ENCODE measurements at regions of chr10 and their contacts with region 1.

Region 1: GRCh38 chr10:119416855-119417254 is 125.7 kb downstream of the RGS10 start:
- DNase-seq: peak; percentile 45 to 83 (median 73)
- ATAC-seq: peak; percentile 86
- H3K4me3 ChIP-seq: no peak overlapping the region
- H3K4me3 Mint-ChIP-seq: no peak overlapping the region
- H3K27ac ChIP-seq: no peak overlapping the region
- H3K27ac Mint-ChIP-seq: no peak overlapping the region
- H3K4me1 ChIP-seq: no peaks in the 10 kb centered on the region
- H3K4me1 Mint-ChIP-seq: peaks cover 2% of the 10 kb centered on the region
- H3K27me3 ChIP-seq: no peaks in the 10 kb centered on the region
- H3K27me3 Mint-ChIP-seq: no peaks in the 10 kb centered on the region
- CTCF ChIP-seq: peak; percentile 60

Region 2: DNA sequence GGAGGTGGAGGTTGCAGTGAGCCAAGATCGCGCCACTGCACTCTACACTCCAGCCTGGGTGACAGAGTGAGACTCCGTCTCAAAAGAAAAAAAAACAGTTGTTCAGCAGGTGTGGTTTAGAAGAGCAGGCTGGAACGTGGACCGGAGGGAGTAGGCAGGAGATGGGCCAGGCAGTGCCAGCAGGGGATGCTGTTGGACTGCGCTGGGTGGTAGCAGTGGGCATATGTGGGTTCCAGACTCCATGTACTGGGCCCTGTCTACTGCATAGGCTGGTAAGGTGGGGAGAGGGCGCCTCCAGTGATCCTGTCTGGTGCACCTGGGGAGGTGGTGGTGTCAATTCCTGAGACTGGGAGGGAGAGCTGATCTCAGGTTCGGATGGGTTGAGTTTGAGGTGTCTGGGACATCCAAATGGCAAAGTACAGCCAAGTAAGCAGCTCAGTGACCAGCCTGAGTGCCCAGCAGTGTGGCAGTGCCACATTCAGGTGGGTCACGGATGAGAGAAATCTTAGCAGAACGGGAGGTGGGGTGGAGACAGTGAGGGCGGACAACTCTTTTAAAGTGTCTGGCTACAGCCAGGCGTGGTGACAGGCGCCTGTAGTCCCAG is 277.3 kb before region 1 on chr10:
- CTCF ChIA-PET with region 1: interaction called, 6 read pairs
- POLR2A ChIA-PET with region 1: no interaction called
- intact Hi-C with region 1: loop called (anchors 1 to 2 kb)
- DNase-seq: peak; percentile 14 to 71 (median 53)
- ATAC-seq: peak; percentile 88
- H3K4me3 ChIP-seq: no peak overlapping the region
- H3K4me3 Mint-ChIP-seq: no peak overlapping the region
- H3K27ac ChIP-seq: no peak overlapping the region
- H3K27ac Mint-ChIP-seq: peak overlapping the region; percentile 34
- H3K4me1 ChIP-seq: no peaks in the 10 kb centered on the region
- H3K4me1 Mint-ChIP-seq: peaks cover 6% of the 10 kb centered on the region
- H3K27me3 ChIP-seq: no peaks in the 10 kb centered on the region
- H3K27me3 Mint-ChIP-seq: no peaks in the 10 kb centered on the region
- CTCF ChIP-seq: peak; percentile 38

Region 3: GRCh38 chr10:119199231-119199992 is 217.4 kb before region 1 on chr10:
- CTCF ChIA-PET with region 1: interaction called, 33 read pairs
- POLR2A ChIA-PET with region 1: no interaction called
- intact Hi-C with region 1: loop called (anchors 1 kb)
- DNase-seq: peak in 8 of 9 experiments; percentile 15 to 72 (median 46)
- ATAC-seq: peak; percentile 82
- H3K4me3 ChIP-seq: no peak overlapping the region
- H3K4me3 Mint-ChIP-seq: no peak overlapping the region
- H3K27ac ChIP-seq: no peak overlapping the region
- H3K27ac Mint-ChIP-seq: no peak overlapping the region
- H3K4me1 ChIP-seq: no peaks in the 10 kb centered on the region
- H3K4me1 Mint-ChIP-seq: peaks cover 7% of the 10 kb centered on the region
- H3K27me3 ChIP-seq: no peaks in the 10 kb centered on the region
- H3K27me3 Mint-ChIP-seq: no peaks in the 10 kb centered on the region
- CTCF ChIP-seq: peak; percentile 44

Region 4: DNA sequence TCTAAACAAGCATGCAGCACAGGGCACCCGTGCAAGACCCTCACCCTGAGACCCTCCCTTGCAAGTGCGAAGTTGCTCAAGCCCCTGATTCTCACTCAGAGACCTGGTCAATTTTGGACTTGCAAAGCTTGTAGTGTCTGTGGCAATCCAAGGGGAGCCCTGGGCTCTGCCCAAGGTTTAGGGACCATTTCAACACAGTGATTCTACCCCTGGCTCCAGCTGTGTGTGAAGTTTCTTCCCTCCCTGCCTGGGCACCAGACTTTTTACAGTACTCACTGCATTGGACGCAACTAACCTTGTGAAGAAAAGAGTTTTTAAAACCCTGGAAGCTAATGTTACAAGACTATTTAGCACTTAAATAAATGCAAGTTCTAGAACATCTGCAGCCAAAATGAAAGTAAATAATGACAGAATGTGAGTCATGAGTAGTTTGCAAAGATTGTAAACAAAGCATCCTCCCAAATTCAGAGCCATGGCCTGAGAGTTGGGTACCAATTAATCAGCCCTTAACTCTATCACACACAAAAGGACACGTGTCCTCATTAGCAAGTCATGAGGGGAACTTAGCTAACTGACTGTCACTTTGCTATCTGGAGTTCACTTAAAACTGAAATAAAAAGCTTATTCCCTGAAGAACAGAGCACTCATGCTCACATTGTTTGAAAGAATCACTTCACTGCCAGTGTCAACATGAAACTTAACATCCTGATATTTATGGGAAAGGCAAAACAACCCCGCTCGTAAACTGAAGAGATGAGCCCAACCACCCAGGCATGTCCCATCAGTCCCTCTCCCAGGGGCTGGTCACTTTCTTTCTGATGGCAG is 77.6 kb after region 1 on chr10:
- CTCF ChIA-PET with region 1: no interaction called
- POLR2A ChIA-PET with region 1: no interaction called
- intact Hi-C with region 1: loop called in 1 of 2 experiments (anchors 1 kb)
- DNase-seq: no peak
- ATAC-seq: peak; percentile 16
- H3K4me3 ChIP-seq: no peak overlapping the region
- H3K4me3 Mint-ChIP-seq: peak overlapping the region; percentile 44
- H3K27ac ChIP-seq: peak overlapping the region in 1 of 2 experiments; percentile 40
- H3K27ac Mint-ChIP-seq: peak overlapping the region; percentile 93
- H3K4me1 ChIP-seq: peaks cover 87% of the 10 kb centered on the region
- H3K4me1 Mint-ChIP-seq: peaks cover 74% of the 10 kb centered on the region
- H3K27me3 ChIP-seq: no peaks in the 10 kb centered on the region
- H3K27me3 Mint-ChIP-seq: no peaks in the 10 kb centered on the region
- CTCF ChIP-seq: no peak